OCI-LY7 (cell line): ENCODE measurements at regions of chr2 and their contacts with region 1.

Region 1: GRCh38 chr2:137838255-137839092 is 125.8 kb upstream of the HNMT start:
- DNase-seq: peak; percentile 50
- H3K4me3 ChIP-seq: no peak overlapping the region
- H3K27ac ChIP-seq: no peak overlapping the region
- H3K4me1 ChIP-seq: no peaks in the 10 kb centered on the region
- CTCF ChIP-seq: peak; percentile 85

Region 2: GRCh38 chr2:136423516-136423996 is 1414.9 kb before region 1 on chr2:
- CTCF ChIA-PET with region 1: no interaction called
- POLR2A ChIA-PET with region 1: no interaction called
- intact Hi-C with region 1: loop called (anchors 2 kb)
- DNase-seq: peak; percentile 94
- H3K4me3 ChIP-seq: peak overlapping the region; percentile 65
- H3K27ac ChIP-seq: no peak overlapping the region
- H3K4me1 ChIP-seq: peaks cover 43% of the 10 kb centered on the region
- CTCF ChIP-seq: peak; percentile 94

Region 3: DNA sequence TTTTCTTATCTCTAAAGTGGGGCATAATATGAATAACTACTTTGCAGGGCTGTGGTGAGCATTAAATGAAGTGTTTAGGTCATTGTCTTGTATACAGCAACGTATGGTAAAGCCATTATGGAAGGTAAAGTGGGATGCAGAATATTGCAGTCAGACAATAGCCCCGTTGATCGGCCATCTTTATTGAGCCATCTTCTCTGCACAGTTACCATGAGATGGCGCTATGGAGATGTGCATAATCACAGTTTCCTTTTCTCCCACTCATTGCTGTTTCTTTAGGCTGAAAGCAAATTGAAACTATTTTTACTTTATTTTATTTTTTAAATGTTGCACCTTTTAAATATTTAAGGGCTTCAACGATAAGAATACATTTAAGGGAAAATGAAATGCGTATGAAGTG is 964.2 kb before region 1 on chr2:
- CTCF ChIA-PET with region 1: no interaction called
- POLR2A ChIA-PET with region 1: no interaction called
- intact Hi-C with region 1: loop called (anchors 5 kb)
- DNase-seq: peak; percentile 25
- H3K4me3 ChIP-seq: no peak overlapping the region
- H3K27ac ChIP-seq: no peak overlapping the region
- H3K4me1 ChIP-seq: no peaks in the 10 kb centered on the region
- CTCF ChIP-seq: peak; percentile 76

Region 4: GRCh38 chr2:136901732-136902131 is 936.7 kb before region 1 on chr2:
- CTCF ChIA-PET with region 1: no interaction called
- POLR2A ChIA-PET with region 1: no interaction called
- intact Hi-C with region 1: no loop called
- DNase-seq: no peak
- H3K4me3 ChIP-seq: no peak overlapping the region
- H3K27ac ChIP-seq: no peak overlapping the region
- H3K4me1 ChIP-seq: no peaks in the 10 kb centered on the region
- CTCF ChIP-seq: no peak

Region 5: GRCh38 chr2:136932700-136933099 is 905.8 kb before region 1 on chr2:
- CTCF ChIA-PET with region 1: no interaction called
- POLR2A ChIA-PET with region 1: no interaction called
- intact Hi-C with region 1: loop called (anchors 5 kb)
- DNase-seq: peak; percentile 13
- H3K4me3 ChIP-seq: no peak overlapping the region
- H3K27ac ChIP-seq: no peak overlapping the region
- H3K4me1 ChIP-seq: no peaks in the 10 kb centered on the region
- CTCF ChIP-seq: peak; percentile 62

Region 6: GRCh38 chr2:137964066-137964858 is 125.8 kb after region 1 on chr2 and contains the start of gene HNMT:
- CTCF ChIA-PET with region 1: no interaction called
- POLR2A ChIA-PET with region 1: no interaction called
- intact Hi-C with region 1: no loop called
- DNase-seq: no peak
- H3K4me3 ChIP-seq: no peak within 1 kb of the TSS
- H3K27ac ChIP-seq: no peak within 1 kb of the TSS
- H3K4me1 ChIP-seq: no peaks in the 10 kb centered on the region
- CTCF ChIP-seq: no peak
- total RNA-seq, gene HNMT: not detected in 2 replicates

Region 7: DNA sequence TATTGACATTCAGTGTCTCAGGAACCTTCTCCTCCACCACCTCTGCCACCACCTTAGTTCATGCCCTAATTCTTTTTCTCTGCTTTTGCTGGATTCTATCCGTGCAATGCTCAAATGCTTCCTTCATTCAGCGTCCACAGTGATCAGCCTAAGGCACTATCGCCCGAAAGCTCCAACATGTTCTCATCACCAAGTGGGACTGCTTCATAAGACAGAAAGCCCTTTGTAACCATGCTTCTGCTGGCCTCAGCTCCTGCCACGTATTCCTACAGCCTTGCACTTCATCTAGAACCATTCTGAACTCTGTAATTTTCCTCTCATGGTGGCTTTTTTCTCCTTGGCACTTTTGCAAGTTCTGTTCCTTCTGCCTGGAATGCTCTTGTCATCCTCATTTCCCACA is 348.7 kb after region 1 on chr2:
- CTCF ChIA-PET with region 1: no interaction called
- POLR2A ChIA-PET with region 1: no interaction called
- intact Hi-C with region 1: no loop called
- DNase-seq: no peak
- H3K4me3 ChIP-seq: no peak overlapping the region
- H3K27ac ChIP-seq: no peak overlapping the region
- H3K4me1 ChIP-seq: no peaks in the 10 kb centered on the region
- CTCF ChIP-seq: no peak

Region 8: GRCh38 chr2:138298900-138299299 is 460.4 kb after region 1 on chr2:
- CTCF ChIA-PET with region 1: no interaction called
- POLR2A ChIA-PET with region 1: no interaction called
- intact Hi-C with region 1: no loop called
- DNase-seq: no peak
- H3K4me3 ChIP-seq: no peak overlapping the region
- H3K27ac ChIP-seq: no peak overlapping the region
- H3K4me1 ChIP-seq: no peaks in the 10 kb centered on the region
- CTCF ChIP-seq: no peak